Mammary epithelial cell (primary cell): ENCODE measurements at regions of chr2 and their contacts with region 1.

Region 1: DNA sequence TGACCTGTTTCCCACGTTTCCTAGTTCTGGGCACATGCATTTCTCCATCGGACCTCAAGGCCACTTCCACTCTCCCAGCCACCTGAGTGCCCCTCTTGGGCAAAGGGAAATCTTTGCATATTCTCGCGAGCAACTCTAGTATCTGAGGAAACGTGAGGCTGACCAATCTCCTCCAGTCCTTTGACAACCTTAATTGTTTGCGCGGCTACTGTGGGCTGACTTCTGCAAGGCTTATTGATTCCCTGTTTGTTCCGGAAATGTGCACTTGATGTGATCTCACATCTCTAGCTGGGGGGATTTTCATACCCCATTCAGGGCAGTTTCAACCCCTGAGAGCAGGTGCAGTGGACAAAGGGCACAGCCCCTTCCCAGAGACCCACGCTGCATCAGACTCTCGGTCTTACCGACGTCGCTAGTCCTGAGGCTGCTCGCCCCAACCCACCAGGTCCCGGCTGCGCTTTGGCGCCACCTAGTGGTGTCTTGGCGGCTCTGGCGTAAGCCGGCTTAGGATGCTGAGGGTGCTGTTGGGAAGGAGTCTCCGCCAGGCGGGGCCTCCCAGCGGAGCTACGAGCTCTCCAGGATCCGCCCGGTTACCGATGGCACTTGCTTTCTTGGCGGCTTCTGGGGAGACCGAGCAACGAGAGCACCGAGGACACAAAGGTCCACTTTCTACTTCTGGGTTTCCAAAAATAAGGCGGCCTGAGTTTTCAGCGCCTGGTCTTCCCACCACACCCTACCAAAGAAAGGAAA is 24.8 kb upstream of the SPR start:
- DNase-seq: peak; percentile 84
- H3K4me3 ChIP-seq: peak overlapping the region in 2 of 3 experiments; percentile 13 to 33
- H3K27ac ChIP-seq: no peak overlapping the region
- H3K4me1 ChIP-seq: peaks cover 18% of the 10 kb centered on the region
- H3K27me3 ChIP-seq: no peaks in the 10 kb centered on the region
- CTCF ChIP-seq: peak; percentile 97 to 99

Region 2: DNA sequence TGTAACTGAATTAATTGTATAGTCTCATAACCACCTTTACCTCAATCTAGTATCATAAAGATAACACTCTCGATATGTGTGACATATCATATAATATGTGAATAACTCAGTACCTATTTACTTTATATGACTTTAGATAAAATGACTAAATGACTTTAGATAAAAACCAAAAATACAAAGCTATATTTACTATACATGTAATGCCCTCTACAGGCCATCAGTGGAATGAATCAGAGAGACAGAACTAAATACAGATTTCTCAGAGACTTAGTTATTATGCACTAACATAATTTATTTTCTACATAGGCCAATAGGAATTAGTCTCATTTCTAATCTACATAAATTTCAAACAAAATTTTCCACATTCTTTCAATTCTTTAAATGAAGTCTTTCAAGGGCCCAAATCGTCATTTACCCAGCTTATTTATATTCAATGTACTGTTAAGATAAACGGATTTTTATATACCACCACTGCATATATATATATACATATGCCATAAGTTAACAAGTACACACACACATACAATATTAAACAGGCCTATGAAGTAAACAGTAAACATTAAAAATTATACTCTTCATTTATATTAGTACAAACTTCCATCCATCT is 256.5 kb before region 1 on chr2:
- CTCF ChIA-PET with region 1: no interaction called
- dilution Hi-C with region 1: no loop called
- in situ Hi-C with region 1: no loop called
- intact Hi-C with region 1: loop called (anchors 10 kb)
- DNase-seq: no peak
- H3K4me3 ChIP-seq: no peak overlapping the region
- H3K27ac ChIP-seq: no peak overlapping the region
- H3K4me1 ChIP-seq: no peaks in the 10 kb centered on the region
- H3K27me3 ChIP-seq: no peaks in the 10 kb centered on the region
- CTCF ChIP-seq: peak; percentile 65 to 86

Region 3: GRCh38 chr2:72770879-72771461 is 91.4 kb before region 1 on chr2:
- CTCF ChIA-PET with region 1: interaction called, 3 read pairs
- dilution Hi-C with region 1: no loop called
- in situ Hi-C with region 1: loop called (anchors 5 kb)
- intact Hi-C with region 1: loop called (anchors 1 kb)
- DNase-seq: peak; percentile 60
- H3K4me3 ChIP-seq: no peak overlapping the region
- H3K27ac ChIP-seq: no peak overlapping the region
- H3K4me1 ChIP-seq: peaks cover 6% of the 10 kb centered on the region
- H3K27me3 ChIP-seq: no peaks in the 10 kb centered on the region
- CTCF ChIP-seq: peak; percentile 74 to 82

Region 4: DNA sequence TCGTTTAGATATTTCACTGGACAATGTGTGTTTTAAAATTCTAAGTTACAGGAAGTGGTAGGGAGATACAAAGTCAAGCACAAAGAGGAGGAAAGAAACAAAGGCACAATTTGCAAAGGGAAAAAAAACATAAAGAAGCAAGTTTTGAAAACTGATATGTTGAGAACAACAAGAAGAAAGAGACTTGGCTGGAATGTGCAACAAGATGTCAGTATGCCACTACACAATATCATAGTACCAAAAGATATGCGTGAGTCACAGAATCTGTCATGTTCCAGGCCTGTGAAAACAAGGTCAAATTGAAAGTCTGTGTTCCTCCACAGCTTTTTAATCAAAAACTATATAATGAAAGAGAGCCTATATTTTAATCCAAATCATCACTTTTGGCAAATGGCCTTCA is 48.6 kb before region 1 on chr2:
- CTCF ChIA-PET with region 1: no interaction called
- dilution Hi-C with region 1: no loop called
- in situ Hi-C with region 1: no loop called
- intact Hi-C with region 1: loop called (anchors 1 kb)
- DNase-seq: peak; percentile 42
- H3K4me3 ChIP-seq: no peak overlapping the region
- H3K27ac ChIP-seq: no peak overlapping the region
- H3K4me1 ChIP-seq: peaks cover 9% of the 10 kb centered on the region
- H3K27me3 ChIP-seq: no peaks in the 10 kb centered on the region
- CTCF ChIP-seq: no peak